Common myeloid progenitor, CD34-positive (primary cell): ENCODE measurements at regions of chr3 and their contacts with region 1.

Region 1: GRCh38 chr3:56790016-56790821 is 11.5 kb downstream of the ARHGEF3 start:
- DNase-seq: peak in 2 of 3 donors; percentile 73 to 83
- H3K4me3 ChIP-seq: peak overlapping the region in 4 of 7 experiments; percentile 5 to 45 (median 16)
- H3K27ac ChIP-seq: peak overlapping the region; percentile 30 to 69
- H3K4me1 ChIP-seq: peaks cover 17 to 76% (median 59%) of the 10 kb centered on the region in 4 experiments
- H3K27me3 ChIP-seq: no peaks in the 10 kb centered on the region

Region 2: DNA sequence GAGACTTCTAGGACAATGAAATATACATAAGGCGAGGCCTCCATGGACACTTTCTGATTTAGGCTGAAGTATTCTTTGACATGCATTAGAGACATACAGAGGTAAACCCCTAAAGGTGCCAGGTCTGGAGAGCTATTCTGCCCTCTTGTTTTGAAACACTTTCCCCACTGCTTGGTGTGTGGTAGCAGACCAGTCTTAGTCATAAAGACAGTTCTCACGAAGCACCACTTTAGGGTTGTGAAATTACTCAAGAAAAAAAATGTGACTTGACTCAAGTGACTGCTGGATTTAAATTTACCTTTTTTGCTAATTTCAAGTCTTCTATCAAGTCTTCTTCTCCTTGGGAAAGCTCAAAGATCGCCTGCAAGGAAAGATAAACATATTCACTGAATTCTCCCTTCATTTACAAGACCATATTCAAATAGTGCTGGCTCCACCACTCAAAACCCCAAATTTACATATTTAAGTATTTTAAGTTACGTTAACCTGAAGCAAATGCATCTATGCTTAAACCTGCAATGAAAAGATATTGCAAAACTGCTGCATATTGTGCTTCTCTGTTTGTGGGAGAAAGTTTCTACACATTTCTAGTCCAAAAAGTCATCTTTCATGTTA is 36.9 kb before region 1 on chr3:
- CTCF ChIA-PET with region 1: interaction called, 10 read pairs
- POLR2A ChIA-PET with region 1: no interaction called
- DNase-seq: peak in 2 of 3 donors; percentile 52 to 55
- H3K4me3 ChIP-seq: peak overlapping the region in 4 of 7 experiments; percentile 67 to 92 (median 80)
- H3K27ac ChIP-seq: peak overlapping the region in 1 of 2 experiments; percentile 81
- H3K4me1 ChIP-seq: peaks cover 23 to 76% (median 43%) of the 10 kb centered on the region in 4 experiments
- H3K27me3 ChIP-seq: no peaks in the 10 kb centered on the region

Region 3: GRCh38 chr3:56839784-56840715 is 49.8 kb after region 1 on chr3:
- CTCF ChIA-PET with region 1: no interaction called
- POLR2A ChIA-PET with region 1: no interaction called
- DNase-seq: no peak
- H3K4me3 ChIP-seq: no peak overlapping the region
- H3K27ac ChIP-seq: no peak overlapping the region
- H3K4me1 ChIP-seq: peaks cover 0 to 18% (median 4%) of the 10 kb centered on the region in 4 experiments
- H3K27me3 ChIP-seq: no peaks in the 10 kb centered on the region